Naive thymus-derived CD8-positive, alpha-beta T cell (primary cell): ENCODE measurements at regions of chr7 and their contacts with region 1.

Region 1: DNA sequence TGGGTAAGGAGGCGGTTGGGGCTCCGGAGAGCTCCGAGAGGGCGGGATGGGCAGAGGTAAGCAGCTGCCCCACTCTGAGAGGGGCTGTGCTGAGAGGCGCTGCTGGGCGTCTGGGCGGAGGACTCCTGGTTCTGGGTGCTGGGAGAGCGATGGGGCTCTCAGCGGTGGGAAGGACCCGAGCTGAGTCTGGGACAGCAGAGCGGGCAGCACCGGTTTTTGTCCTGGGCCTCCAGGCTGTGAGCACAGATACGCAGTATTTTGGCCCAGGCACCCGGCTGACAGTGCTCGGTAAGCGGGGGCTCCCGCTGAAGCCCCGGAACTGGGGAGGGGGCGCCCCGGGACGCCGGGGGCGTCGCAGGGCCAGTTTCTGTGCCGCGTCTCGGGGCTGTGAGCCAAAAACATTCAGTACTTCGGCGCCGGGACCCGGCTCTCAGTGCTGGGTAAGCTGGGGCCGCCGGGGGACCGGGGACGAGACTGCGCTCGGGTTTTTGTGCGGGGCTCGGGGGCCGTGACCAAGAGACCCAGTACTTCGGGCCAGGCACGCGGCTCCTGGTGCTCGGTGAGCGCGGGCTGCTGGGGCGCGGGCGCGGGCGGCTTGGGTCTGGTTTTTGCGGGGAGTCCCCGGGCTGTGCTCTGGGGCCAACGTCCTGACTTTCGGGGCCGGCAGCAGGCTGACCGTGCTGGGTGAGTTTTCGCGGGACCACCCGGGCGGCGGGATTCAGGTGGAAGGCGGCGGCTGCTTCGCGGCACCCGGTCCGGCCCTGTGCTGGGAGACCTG is 26.0 kb downstream of the PRSS2 start:
- DNase-seq: peak in 5 of 10 donors; percentile 18 to 50 (median 33)
- ATAC-seq: peak in 1 of 2 donors; percentile 6
- H3K4me3 Mint-ChIP-seq: peak overlapping the region; percentile 87 to 100 (median 98)
- H3K27ac Mint-ChIP-seq: peak overlapping the region; percentile 94 to 100 (median 100)
- H3K4me1 Mint-ChIP-seq: peaks cover 50 to 86% (median 71%) of the 10 kb centered on the region in 4 donors
- H3K27me3 Mint-ChIP-seq: no peaks in the 10 kb centered on the region

Region 2: DNA sequence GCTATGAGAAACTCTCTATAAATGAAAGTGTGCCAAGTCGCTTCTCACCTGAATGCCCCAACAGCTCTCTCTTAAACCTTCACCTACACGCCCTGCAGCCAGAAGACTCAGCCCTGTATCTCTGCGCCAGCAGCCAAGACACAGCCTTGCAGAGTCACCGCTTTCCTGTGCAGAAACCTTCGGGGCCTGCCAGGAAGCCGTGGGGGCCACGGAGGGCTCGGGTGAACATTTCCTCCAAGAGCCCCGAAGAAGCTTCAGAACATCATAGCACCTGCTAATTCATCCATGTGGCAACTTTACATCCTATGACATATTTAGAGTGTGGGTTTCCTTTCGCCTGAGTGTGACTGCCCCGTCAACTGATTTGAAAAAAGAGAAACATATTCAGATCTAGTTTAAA is 483.3 kb before region 1 on chr7:
- POLR2A ChIA-PET with region 1: interaction called, 34 read pairs
- DNase-seq: peak in 5 of 10 donors; percentile 26 to 70 (median 43)
- ATAC-seq: peak; percentile 79 to 90
- H3K4me3 Mint-ChIP-seq: peak overlapping the region; percentile 15 to 72 (median 60)
- H3K27ac Mint-ChIP-seq: peak overlapping the region in 8 of 10 donors; percentile 2 to 87 (median 44)
- H3K4me1 Mint-ChIP-seq: peaks cover 12 to 17% (median 16%) of the 10 kb centered on the region in 4 donors
- H3K27me3 Mint-ChIP-seq: peaks cover 4 to 48% (median 12%) of the 10 kb centered on the region in 5 donors

Region 3: DNA sequence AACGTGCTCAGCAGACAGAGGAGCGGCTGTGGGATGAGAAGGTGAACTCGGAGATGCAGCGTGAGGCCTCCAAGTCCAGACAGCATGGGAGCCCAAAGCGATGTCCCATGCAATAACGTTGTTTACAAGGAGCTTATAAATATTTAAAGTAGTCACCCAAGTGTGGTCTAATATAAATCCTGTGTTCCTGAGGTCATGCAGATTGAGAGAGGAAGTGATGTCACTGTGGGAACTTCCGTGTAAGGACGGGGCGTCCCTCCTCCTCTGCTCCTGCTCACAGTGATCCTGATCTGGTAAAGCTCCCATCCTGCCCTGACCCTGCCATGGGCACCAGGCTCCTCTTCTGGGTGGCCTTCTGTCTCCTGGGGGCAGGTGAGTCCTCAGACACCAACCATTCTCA is 444.3 kb before region 1 on chr7:
- POLR2A ChIA-PET with region 1: interaction called, 20 read pairs
- DNase-seq: no peak
- ATAC-seq: peak; percentile 51 to 62
- H3K4me3 Mint-ChIP-seq: peak overlapping the region; percentile 12 to 87 (median 73)
- H3K27ac Mint-ChIP-seq: peak overlapping the region in 9 of 10 donors; percentile 15 to 83 (median 54)
- H3K4me1 Mint-ChIP-seq: peaks cover 24 to 29% (median 26%) of the 10 kb centered on the region in 4 donors
- H3K27me3 Mint-ChIP-seq: peaks cover 0 to 8% (median 1%) of the 10 kb centered on the region in 5 donors

Region 4: GRCh38 chr7:142451296-142451695 is 345.5 kb before region 1 on chr7:
- POLR2A ChIA-PET with region 1: interaction called, 12 read pairs
- DNase-seq: no peak
- ATAC-seq: no peak
- H3K4me3 Mint-ChIP-seq: peak overlapping the region in 5 of 10 donors; percentile 20 to 48 (median 39)
- H3K27ac Mint-ChIP-seq: peak overlapping the region in 4 of 10 donors; percentile 23 to 63 (median 46)
- H3K4me1 Mint-ChIP-seq: peaks cover 14 to 24% (median 15%) of the 10 kb centered on the region in 4 donors
- H3K27me3 Mint-ChIP-seq: peaks cover 0 to 8% (median 0%) of the 10 kb centered on the region in 5 donors

Region 5: GRCh38 chr7:142523821-142524460 is 272.9 kb before region 1 on chr7:
- POLR2A ChIA-PET with region 1: interaction called, 41 read pairs
- DNase-seq: no peak
- ATAC-seq: no peak
- H3K4me3 Mint-ChIP-seq: no peak overlapping the region
- H3K27ac Mint-ChIP-seq: peak overlapping the region in 6 of 10 donors; percentile 5 to 71 (median 29)
- H3K4me1 Mint-ChIP-seq: peaks cover 10 to 24% (median 17%) of the 10 kb centered on the region in 4 donors
- H3K27me3 Mint-ChIP-seq: no peaks in the 10 kb centered on the region

Region 6: DNA sequence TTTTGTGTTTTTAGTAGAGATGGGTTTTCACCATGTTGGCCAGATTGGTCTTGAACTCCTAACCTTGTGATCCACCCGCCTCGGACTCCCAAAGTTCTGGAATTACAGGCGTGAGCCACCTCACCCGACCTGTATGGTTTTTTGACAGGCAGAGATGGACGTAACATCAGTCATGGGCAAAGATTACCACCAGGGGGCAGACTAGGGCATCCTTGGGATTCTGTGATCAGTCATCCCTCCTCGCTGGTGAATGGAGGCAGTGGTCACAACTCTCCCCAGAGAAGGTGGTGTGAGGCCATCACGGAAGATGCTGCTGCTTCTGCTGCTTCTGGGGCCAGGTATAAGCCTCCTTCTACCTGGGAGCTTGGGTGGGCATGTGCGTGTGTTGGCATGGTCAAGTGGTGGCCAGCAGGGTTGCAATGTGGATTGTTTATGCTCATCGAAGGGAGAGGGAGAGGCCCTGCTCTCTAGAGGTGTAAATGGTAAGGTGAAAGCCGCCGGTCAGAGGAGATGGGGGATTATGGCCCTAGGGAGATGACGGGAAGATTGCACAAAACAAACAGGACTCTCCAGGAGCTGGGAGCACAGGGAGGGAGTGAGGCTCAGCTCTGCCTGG is 170.3 kb before region 1 on chr7:
- POLR2A ChIA-PET with region 1: interaction called, 19 read pairs
- DNase-seq: peak; percentile 32 to 80 (median 59)
- ATAC-seq: peak; percentile 74 to 81
- H3K4me3 Mint-ChIP-seq: peak overlapping the region; percentile 53 to 89 (median 69)
- H3K27ac Mint-ChIP-seq: peak overlapping the region in 9 of 10 donors; percentile 61 to 95 (median 86)
- H3K4me1 Mint-ChIP-seq: peaks cover 0 to 5% (median 1%) of the 10 kb centered on the region in 4 donors
- H3K27me3 Mint-ChIP-seq: peaks cover 0 to 3% (median 0%) of the 10 kb centered on the region in 5 donors

Region 7: DNA sequence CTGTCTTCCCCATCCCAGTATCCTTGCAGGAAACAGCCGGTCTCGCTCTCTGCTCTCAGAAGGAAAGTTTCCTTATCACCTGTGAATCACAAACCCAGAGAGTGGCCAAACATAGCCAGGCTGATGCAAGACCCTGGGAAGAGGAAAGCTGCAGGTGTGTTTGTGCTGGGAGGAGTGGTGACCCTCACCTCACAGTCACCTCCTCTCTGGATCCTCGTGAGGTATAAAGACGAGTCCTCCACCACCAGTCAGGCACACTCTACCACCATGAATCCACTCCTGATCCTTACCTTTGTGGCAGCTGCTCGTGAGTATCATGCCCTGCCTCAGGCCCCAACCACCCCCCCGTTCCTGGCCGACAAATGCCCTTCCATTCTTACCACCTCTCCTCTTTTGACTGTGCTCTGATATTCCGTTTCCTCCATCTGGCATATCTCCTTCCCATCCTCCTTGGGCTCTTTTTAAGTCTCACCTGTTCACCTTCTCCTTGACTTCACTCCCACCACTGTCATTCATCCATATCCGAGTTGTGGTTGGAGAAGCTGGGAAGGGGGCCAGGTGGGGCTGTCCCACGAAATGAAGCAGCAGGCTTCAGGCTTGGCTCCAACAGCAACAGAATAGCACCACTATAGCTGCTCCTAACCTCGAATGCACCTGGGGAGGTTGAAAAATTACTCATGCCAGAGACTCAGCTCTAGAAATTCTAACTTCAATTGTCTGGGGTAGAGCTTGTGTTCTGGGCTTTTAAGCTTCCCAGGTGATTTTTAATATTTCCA is 47.4 kb before region 1 on chr7 and contains the start of gene PRSS1:
- POLR2A ChIA-PET with region 1: no interaction called
- DNase-seq: no peak
- ATAC-seq: no peak
- H3K4me3 Mint-ChIP-seq: no peak within 1 kb of the TSS
- H3K27ac Mint-ChIP-seq: no peak within 1 kb of the TSS
- H3K4me1 Mint-ChIP-seq: peaks cover 0 to 1% (median 0%) of the 10 kb centered on the region in 4 donors
- H3K27me3 Mint-ChIP-seq: no peaks in the 10 kb centered on the region
- polyA plus RNA-seq, gene PRSS1: not detected

Region 8: GRCh38 chr7:142771353-142771723 is 25.5 kb before region 1 on chr7:
- POLR2A ChIA-PET with region 1: no interaction called
- DNase-seq: no peak
- ATAC-seq: no peak
- H3K4me3 Mint-ChIP-seq: no peak overlapping the region
- H3K27ac Mint-ChIP-seq: no peak overlapping the region
- H3K4me1 Mint-ChIP-seq: peaks cover 0 to 16% (median 3%) of the 10 kb centered on the region in 4 donors
- H3K27me3 Mint-ChIP-seq: peaks cover 0 to 7% (median 0%) of the 10 kb centered on the region in 5 donors

Region 9: DNA sequence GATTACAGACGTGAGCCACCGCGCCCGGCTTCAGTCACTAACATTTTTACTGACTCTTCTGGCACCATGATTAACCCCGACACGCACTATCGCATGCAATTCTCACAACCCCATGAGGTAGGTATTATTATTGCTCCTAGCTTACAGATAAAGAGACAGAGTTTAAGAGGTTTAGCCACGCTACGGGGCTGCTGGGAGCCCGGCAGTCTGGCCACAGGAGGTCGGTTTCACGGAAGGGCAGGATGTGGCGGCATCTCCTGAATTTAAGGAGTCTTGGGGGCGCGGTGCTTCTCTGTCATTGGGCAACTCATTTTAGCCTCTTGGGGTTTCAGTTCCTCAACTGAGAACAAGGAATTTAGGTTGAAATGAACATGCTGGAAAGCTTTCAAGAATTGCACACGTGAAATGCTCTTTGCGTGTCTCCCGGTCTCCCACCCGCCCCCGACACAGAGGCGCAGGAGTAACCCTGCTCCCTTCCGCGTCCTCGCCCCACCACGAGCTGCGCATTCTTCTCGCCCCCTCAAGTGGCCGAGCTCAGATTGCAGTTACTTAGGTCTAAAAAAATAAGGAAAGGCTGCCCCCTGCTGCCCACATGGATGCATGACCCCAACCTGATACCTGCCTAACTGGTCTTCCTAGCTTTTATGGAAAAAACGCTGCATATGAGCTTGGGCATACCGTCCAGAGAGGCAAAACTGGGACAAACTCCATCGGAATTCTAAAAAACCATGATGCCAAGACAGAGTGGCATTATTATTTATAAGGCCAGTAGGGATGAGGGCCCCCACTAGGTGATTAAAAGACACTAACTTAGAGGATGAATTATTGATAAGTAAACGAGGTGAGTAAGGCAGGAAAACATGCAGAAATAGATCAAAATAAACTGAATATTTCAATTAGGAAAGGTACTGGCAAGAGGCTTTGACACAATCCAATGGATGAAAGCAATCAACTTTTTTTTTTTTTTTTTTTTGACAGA is 13.6 kb before region 1 on chr7:
- POLR2A ChIA-PET with region 1: interaction called, 906 read pairs
- DNase-seq: peak; percentile 61 to 90 (median 75)
- ATAC-seq: peak; percentile 23 to 38
- H3K4me3 Mint-ChIP-seq: peak overlapping the region; percentile 70 to 87 (median 84)
- H3K27ac Mint-ChIP-seq: peak overlapping the region; percentile 85 to 100 (median 99)
- H3K4me1 Mint-ChIP-seq: peaks cover 2 to 34% (median 7%) of the 10 kb centered on the region in 4 donors
- H3K27me3 Mint-ChIP-seq: no peaks in the 10 kb centered on the region

Region 10: DNA sequence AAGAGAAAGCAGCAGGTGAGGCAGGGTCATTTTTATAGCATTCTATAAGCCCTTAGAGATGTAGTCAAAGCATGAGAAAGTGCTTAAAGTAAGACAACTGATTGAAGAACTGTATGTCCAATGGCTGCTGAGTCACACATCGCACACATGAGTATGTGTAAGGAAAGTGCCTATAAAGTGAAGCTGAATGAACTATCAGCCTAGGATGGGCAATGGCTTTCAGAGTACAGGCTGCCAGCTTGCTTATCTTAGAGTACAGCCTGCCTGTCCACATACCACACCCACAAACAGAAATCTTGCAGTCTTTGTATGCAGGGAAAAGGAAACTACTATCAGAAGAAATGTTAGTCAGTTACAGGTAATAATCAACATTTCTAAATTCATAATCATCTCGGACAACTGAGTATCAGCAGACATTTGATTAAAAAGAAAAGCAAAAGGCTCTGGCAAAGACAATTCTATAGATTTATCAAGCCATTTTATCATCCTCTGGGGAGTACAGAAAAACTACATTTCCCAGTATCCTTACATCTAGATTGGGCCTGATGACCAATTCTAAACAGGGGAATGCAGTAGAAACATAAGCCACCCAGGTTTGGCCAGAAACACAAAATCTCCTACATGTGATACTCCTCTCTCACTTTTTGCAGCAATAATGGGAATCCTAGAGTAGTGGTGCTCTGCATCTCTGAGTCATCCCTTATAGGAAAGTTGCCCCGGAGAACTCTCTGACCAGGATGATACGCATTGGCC is 41.8 kb after region 1 on chr7:
- POLR2A ChIA-PET with region 1: no interaction called
- DNase-seq: no peak
- ATAC-seq: no peak
- H3K4me3 Mint-ChIP-seq: no peak overlapping the region
- H3K27ac Mint-ChIP-seq: no peak overlapping the region
- H3K4me1 Mint-ChIP-seq: peaks cover 8 to 21% (median 12%) of the 10 kb centered on the region in 4 donors
- H3K27me3 Mint-ChIP-seq: peaks cover 0 to 1% (median 0%) of the 10 kb centered on the region in 5 donors

Region 11: DNA sequence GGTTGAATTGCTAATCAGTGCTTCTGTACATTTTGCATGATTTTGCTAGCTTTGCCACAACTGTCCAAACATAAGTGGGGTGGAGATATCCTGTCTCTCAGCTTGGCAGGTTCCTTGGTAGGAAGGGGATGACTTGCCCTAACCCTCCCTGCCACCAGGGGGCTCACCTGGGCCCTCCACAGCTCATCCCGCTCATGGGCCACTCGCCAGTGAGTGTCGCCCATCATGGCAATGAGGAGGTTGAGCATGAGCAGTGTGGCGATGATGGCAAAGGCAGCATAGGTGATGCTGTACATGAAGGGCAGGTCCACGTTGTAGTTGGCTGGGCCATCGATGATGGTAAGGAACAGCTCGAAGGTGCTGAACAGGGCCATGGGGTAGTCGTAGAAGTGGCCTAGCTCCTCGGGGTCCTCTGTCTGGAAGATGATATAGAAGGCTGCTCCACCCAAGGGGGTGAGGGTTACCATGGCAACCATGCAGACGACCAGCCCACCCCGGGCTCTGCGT is 76.5 kb after region 1 on chr7:
- POLR2A ChIA-PET with region 1: no interaction called
- DNase-seq: peak in 2 of 10 donors; percentile 17 to 20
- ATAC-seq: no peak
- H3K4me3 Mint-ChIP-seq: no peak overlapping the region
- H3K27ac Mint-ChIP-seq: no peak overlapping the region
- H3K4me1 Mint-ChIP-seq: peaks cover 0 to 4% (median 0%) of the 10 kb centered on the region in 4 donors
- H3K27me3 Mint-ChIP-seq: no peaks in the 10 kb centered on the region